Adrenal gland (tissue), 19 donors: ENCODE measurements at regions of chr15 and their contacts with region 1.

Region 1: GRCh38 chr15:101307048-101307896 is 12.2 kb upstream of the SNRPA1 start:
- DNase-seq: peak in 2 of 7 donors; percentile 4 to 5
- H3K4me3 ChIP-seq: no peak overlapping the region
- H3K27ac ChIP-seq: no peak overlapping the region
- H3K4me1 ChIP-seq: no peaks in the 10 kb centered on the region
- H3K27me3 ChIP-seq: peaks cover 8% of the 10 kb centered on the region
- CTCF ChIP-seq: no peak
- POLR2A ChIP-seq: no peak

Region 2: GRCh38 chr15:101381671-101382212 is 74.5 kb after region 1 on chr15:
- intact Hi-C with region 1: no loop called
- DNase-seq: no peak
- H3K4me3 ChIP-seq: no peak overlapping the region
- H3K27ac ChIP-seq: no peak overlapping the region
- H3K4me1 ChIP-seq: no peaks in the 10 kb centered on the region
- H3K27me3 ChIP-seq: no peaks in the 10 kb centered on the region
- CTCF ChIP-seq: no peak
- POLR2A ChIP-seq: no peak

Region 3: GRCh38 chr15:101397521-101398003 is 90.3 kb after region 1 on chr15:
- intact Hi-C with region 1: no loop called
- DNase-seq: peak in 1 of 7 donors; percentile 36
- H3K4me3 ChIP-seq: no peak overlapping the region
- H3K27ac ChIP-seq: no peak overlapping the region
- H3K4me1 ChIP-seq: no peaks in the 10 kb centered on the region
- H3K27me3 ChIP-seq: no peaks in the 10 kb centered on the region
- CTCF ChIP-seq: no peak
- POLR2A ChIP-seq: no peak

Region 4: DNA sequence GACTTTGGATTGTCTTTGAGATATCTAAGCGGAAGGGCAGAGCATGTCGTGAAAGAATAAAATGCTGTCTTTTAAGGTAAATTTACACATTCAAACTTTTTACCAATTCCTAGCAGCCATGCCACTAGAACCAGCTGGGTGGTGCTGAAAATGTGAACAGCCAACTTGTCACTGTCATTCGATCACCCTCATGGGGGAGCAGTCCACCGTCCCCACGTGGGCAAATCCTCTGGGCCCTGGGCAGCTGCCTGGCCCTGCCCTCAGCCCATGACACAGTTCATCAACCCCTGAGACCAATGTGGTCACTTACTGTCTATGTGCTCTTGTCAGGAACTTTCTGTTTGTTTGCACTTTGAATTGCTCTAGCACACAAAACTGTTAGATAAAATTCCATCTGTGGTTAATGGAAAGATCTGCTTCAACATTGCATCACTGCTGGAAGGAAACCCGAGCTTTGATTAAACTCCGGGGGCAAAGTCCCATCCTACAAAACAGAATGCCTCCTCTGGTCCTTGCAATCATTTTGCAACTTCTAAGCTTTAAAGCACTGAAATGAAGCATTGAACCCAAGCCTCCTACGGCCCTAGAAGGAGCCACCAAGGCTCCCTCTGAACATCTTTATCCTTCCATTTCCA is 132.1 kb after region 1 on chr15:
- intact Hi-C with region 1: loop called in 1 of 2 experiments (anchors 10 kb)
- DNase-seq: peak in 1 of 7 donors; percentile 21
- H3K4me3 ChIP-seq: no peak overlapping the region
- H3K27ac ChIP-seq: peak overlapping the region in 1 of 5 donors; percentile 53
- H3K4me1 ChIP-seq: no peaks in the 10 kb centered on the region
- H3K27me3 ChIP-seq: peaks cover 3% of the 10 kb centered on the region
- CTCF ChIP-seq: no peak
- POLR2A ChIP-seq: no peak

Region 5: GRCh38 chr15:101501703-101502373 is 194.6 kb after region 1 on chr15:
- intact Hi-C with region 1: loop called (anchors 5 to 10 kb)
- DNase-seq: peak; percentile 31 to 66 (median 54)
- H3K4me3 ChIP-seq: no peak overlapping the region
- H3K27ac ChIP-seq: no peak overlapping the region
- H3K4me1 ChIP-seq: peaks cover 7 to 12% of the 10 kb centered on the region in 2 donors
- H3K27me3 ChIP-seq: peaks cover 21% of the 10 kb centered on the region
- CTCF ChIP-seq: peak; percentile 47 to 62 (median 54)
- POLR2A ChIP-seq: no peak

Region 6: GRCh38 chr15:101578437-101578894 is 271.2 kb after region 1 on chr15:
- intact Hi-C with region 1: loop called in 1 of 2 experiments (anchors 10 kb)
- DNase-seq: peak in 6 of 7 donors; percentile 27 to 60 (median 55)
- H3K4me3 ChIP-seq: no peak overlapping the region
- H3K27ac ChIP-seq: no peak overlapping the region
- H3K4me1 ChIP-seq: no peaks in the 10 kb centered on the region
- H3K27me3 ChIP-seq: peaks cover 20% of the 10 kb centered on the region
- CTCF ChIP-seq: peak; percentile 37 to 61 (median 48)
- POLR2A ChIP-seq: no peak

Region 7: GRCh38 chr15:101641166-101641764 is 334.0 kb after region 1 on chr15:
- intact Hi-C with region 1: loop called in 1 of 2 experiments (anchors 5 kb)
- DNase-seq: peak; percentile 63 to 95 (median 86)
- H3K4me3 ChIP-seq: peak overlapping the region in 1 of 4 donors; percentile 19
- H3K27ac ChIP-seq: peak overlapping the region in 3 of 5 donors; percentile 24 to 62 (median 56)
- H3K4me1 ChIP-seq: peaks cover 6 to 16% of the 10 kb centered on the region in 2 donors
- H3K27me3 ChIP-seq: no peaks in the 10 kb centered on the region
- CTCF ChIP-seq: peak; percentile 89 to 98 (median 96)
- POLR2A ChIP-seq: no peak